Left colon (tissue), 2 donors: ENCODE measurements at regions of chr19 and their contacts with region 1.

Region 1: DNA sequence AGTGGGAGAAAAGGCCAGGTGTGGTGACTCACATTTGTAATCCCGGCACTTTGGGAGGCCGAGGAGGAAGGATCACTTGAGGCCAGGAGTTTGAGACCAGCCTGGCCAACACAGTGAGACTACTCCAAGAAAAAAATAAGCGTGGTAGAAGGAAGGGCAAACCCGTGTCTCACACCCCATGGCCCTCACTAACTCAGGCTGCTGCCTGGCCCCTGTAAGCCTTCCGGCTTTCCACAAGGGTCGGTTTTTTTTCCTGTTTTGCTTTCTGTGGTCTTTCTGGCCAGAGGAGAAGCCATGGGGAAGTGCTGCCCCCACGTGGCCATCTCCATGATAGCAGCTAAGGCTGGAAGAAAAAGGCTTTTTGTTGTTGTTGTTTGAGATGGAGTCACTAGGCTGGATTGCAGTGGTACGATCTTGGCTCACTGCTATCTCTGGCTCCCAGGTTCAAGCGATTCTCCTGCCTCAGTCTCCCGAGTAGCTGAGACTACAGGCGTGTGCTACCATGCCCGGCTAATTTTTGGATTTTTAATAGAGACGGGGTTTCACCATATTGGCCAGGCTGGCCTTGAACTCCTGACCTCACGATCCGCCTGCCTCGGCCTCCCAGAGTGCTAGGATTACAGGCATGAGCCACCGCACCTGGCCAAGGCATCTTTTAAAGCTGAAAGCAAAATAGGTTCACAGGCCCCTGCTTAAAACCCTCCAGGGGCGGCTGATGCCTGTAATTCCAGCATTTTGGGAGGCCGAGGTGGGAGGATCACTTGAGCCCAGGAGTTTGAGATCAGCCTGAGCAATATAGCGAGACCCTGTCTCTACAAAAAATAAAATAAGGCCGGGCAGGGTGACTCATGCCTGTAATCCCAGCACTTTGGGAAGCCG is 7.5 kb upstream of the ARHGEF18 start:
- DNase-seq: peak; percentile 58 to 89
- ATAC-seq: peak; percentile 15

Region 2: DNA sequence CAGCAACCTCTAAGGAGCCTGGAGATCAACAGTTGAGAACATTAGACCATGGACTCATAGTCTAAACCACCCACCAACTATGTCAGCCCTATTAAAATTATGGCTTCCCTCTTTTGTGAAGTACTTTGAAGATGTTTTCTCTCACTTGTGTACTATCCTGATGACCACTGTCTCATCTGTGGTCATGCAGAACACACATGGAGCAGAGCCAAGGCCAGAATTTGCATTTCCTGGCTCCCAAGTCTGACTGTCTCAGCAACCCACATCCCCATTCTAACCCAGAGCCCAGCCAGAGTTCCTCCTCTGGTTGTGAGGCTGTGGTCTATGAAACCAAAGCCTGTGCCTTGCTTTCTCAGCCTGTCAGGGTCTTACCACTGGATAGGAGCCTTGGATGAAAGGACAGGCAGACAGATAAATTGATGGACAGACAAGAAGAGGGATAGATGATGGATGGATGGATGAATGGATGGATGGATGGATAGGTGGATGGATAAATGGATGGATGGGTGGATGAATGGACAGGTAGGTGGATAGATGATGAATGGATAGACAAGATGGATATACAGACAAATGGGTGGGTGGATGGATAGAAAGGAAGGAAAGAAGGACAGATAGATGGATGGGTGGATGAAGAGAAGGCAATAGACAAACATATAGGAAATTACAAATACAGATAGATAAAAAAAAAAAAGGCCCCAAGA is 236.3 kb before region 1 on chr19:
- intact Hi-C with region 1: loop called in 1 of 2 experiments (anchors 5 kb)
- DNase-seq: no peak
- ATAC-seq: no peak

Region 3: GRCh38 chr19:7145494-7146485 is 195.4 kb before region 1 on chr19:
- intact Hi-C with region 1: loop called in 1 of 2 experiments (anchors 5 kb)
- DNase-seq: peak in 1 of 2 donors; percentile 48
- ATAC-seq: peak; percentile 93